GM12878 (cell line): ENCODE measurements at regions of chr12 and their contacts with region 1.

Region 1: GRCh38 chr12:5003020-5003666 is 40.5 kb upstream of the KCNA5 start:
- DNase-seq: no peak
- ATAC-seq: peak; percentile 99
- H3K4me3 ChIP-seq: no peak overlapping the region
- H3K27ac ChIP-seq: no peak overlapping the region
- H3K4me1 ChIP-seq: peaks cover 7% of the 10 kb centered on the region; the same call in 1 of the 2 replicates
- H3K27me3 ChIP-seq: no peaks in the 10 kb centered on the region
- CTCF ChIP-seq: peak; percentile 99 to 100 (median 100); a peak in 5 of 6 replicates
- EP300 ChIP-seq: no peak
- POLR2A ChIP-seq: no peak
- RAD21 ChIP-seq: peak; percentile 100

Region 2: DNA sequence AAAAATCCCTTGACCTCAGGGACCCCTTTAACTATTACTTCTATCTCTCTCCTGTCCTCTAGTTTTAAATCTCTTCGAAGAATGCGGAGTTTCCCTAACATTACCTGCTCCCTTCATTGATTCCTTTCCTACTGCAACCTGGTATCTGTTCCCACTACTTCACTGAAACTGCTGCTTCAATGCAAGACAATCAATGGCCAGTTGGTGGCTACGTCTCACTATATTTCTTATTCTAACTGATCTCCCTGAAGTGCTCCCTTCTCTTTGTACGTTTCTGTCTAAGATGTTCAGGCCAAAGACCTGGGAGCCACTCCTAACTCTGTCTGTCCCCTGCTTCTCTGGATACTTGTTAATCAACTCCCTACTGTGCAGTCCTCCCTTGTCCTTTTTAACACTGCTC is 103.8 kb before region 1 on chr12:
- CTCF ChIA-PET with region 1: no interaction called
- POLR2A ChIA-PET with region 1: no interaction called
- RAD21 ChIA-PET with region 1: no interaction called
- SMC1A ChIA-PET with region 1: interaction called, 4 read pairs
- in situ Hi-C with region 1: no loop called
- intact Hi-C with region 1: loop called (anchors 1 kb)
- DNase-seq: no peak
- ATAC-seq: peak; percentile 68
- H3K4me3 ChIP-seq: no peak overlapping the region
- H3K27ac ChIP-seq: no peak overlapping the region
- H3K4me1 ChIP-seq: no peaks in the 10 kb centered on the region
- H3K27me3 ChIP-seq: no peaks in the 10 kb centered on the region
- CTCF ChIP-seq: peak; percentile 44 to 52 (median 46); a peak in 4 of 6 replicates
- EP300 ChIP-seq: no peak
- POLR2A ChIP-seq: no peak
- RAD21 ChIP-seq: peak; percentile 53

Region 3: DNA sequence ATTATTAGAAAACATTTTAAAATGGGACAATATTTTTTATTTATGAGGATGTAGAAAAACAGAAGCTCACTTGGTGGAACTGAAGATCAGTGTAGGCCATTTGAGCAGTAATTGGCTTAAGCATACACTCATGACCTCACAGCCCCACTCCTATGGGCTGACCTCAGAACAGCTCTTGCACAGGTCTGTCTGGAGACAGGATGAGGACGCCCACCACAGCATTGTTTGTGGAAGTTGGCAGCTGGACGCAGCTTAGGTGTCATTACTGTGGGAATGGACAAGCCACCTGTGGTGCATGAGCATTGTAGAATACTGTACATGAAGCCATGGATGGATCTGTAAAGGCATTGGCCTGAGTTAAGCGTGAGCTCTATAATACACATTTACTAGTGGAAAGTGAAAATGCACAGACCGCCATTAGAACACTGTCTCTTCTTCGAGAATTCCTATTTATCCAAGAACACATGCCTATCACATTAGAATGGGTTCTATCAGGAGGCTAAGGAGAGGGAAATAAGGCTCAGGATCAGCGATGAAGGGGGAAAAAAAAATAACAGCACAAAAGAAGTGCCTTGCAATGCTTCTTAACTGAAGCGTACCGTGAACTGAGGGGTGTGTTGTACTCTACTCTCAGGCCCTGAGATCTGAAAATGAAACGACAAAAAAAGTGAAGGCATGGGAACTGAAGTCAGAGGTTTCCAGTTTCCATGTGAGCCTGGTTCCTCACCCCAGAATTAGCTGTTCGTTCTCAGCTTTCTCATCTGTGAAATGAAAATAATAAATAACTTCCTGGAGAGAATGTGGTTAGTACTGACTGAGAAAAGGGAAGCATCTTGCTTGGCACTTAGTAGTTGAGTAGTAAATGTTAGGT is 59.8 kb before region 1 on chr12:
- CTCF ChIA-PET with region 1: no interaction called
- POLR2A ChIA-PET with region 1: no interaction called
- RAD21 ChIA-PET with region 1: no interaction called
- SMC1A ChIA-PET with region 1: no interaction called
- in situ Hi-C with region 1: no loop called
- intact Hi-C with region 1: loop called (anchors 5 kb)
- DNase-seq: peak; percentile 94
- ATAC-seq: peak; percentile 95
- H3K4me3 ChIP-seq: peak overlapping the region; percentile 48; the same call in 1 of the 2 replicates
- H3K27ac ChIP-seq: peak overlapping the region; percentile 94
- H3K4me1 ChIP-seq: peaks cover 32% of the 10 kb centered on the region
- H3K27me3 ChIP-seq: no peaks in the 10 kb centered on the region
- CTCF ChIP-seq: no peak
- EP300 ChIP-seq: no peak
- POLR2A ChIP-seq: no peak
- RAD21 ChIP-seq: 0 out of 2 replicates have a peak, but pooled peaks have one; percentile 5

Region 4: GRCh38 chr12:5428332-5429221 is 425.4 kb after region 1 on chr12:
- CTCF ChIA-PET with region 1: no interaction called
- POLR2A ChIA-PET with region 1: no interaction called
- RAD21 ChIA-PET with region 1: no interaction called
- SMC1A ChIA-PET with region 1: no interaction called
- in situ Hi-C with region 1: no loop called
- intact Hi-C with region 1: no loop called
- DNase-seq: no peak
- ATAC-seq: no peak
- H3K4me3 ChIP-seq: no peak overlapping the region
- H3K27ac ChIP-seq: no peak overlapping the region
- H3K4me1 ChIP-seq: no peaks in the 10 kb centered on the region
- H3K27me3 ChIP-seq: peaks cover 0 to 7% of the 10 kb centered on the region in 2 experiments; a peak in 3 of 4 replicates
- CTCF ChIP-seq: peak in 2 of 3 experiments; percentile 13 to 23; a peak in 2 of 6 replicates
- EP300 ChIP-seq: no peak
- POLR2A ChIP-seq: no peak
- RAD21 ChIP-seq: peak; percentile 40